ENCODE measurements at regions of chr7 and their contacts with region 1.

Region 1: DNA sequence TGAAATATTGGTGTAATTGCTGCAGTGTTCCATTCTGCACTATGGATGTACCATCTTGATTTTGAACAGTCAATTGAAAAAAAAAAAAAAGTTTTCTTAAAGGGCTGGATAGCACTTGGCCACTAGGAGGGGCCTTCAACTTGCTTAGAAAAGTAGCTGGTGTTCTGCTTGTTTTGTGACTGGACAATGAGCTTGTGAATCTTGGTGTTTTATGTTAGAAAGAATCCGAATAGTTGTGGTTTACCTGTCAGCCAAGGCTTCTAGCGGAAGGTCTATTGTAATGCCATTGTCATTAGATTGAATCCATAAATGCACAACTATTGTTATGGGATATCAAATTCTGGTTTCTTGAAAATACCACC is 77.1 kb downstream of the BMPER start:
- DNase-seq: no peak
- H3K4me3 ChIP-seq: no peak overlapping the region
- H3K27ac ChIP-seq: no peak overlapping the region
- H3K4me1 ChIP-seq: no peaks in the 10 kb centered on the region
- H3K27me3 ChIP-seq: no peaks in the 10 kb centered on the region
- CTCF ChIP-seq: peak in 2 of 3 experiments; percentile 65 to 73; a peak in 3 of 4 replicates
- EP300 ChIP-seq: no peak
- POLR2A ChIP-seq: no peak
- RAD21 ChIP-seq: peak; percentile 80 to 86

Region 2: DNA sequence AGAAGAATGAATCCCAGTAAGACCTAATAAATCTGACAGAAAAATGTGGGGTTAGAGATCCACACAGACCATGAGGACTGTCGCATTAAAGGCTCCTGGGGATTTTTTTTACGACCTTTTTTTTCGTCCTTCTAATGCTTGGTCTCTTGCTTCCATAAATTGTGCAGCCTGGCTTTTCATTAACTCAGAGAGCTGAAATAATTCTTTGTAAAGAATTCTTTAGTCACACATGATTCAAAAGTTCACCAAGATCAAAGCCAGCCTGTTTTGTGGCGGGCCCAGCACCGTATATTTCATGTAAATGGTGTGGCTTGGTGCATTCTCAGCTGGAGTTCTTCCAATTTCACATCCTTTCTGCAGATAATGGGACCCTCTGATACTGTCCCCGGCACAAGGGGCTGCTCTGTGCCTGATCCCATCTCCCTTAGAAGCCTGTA is 283.7 kb before region 1 on chr7:
- CTCF ChIA-PET with region 1: no interaction called
- POLR2A ChIA-PET with region 1: no interaction called
- DNase-seq: no peak
- H3K4me3 ChIP-seq: no peak overlapping the region
- H3K27ac ChIP-seq: no peak overlapping the region
- H3K4me1 ChIP-seq: no peaks in the 10 kb centered on the region
- H3K27me3 ChIP-seq: peaks cover 0 to 4% (median 0%) of the 10 kb centered on the region in 4 experiments; a peak in 2 of 7 replicates
- CTCF ChIP-seq: no peak
- EP300 ChIP-seq: no peak
- POLR2A ChIP-seq: no peak
- RAD21 ChIP-seq: no peak

Region 3: GRCh38 chr7:33998476-33998875 is 16.1 kb after region 1 on chr7:
- CTCF ChIA-PET with region 1: interaction called, 12 read pairs
- POLR2A ChIA-PET with region 1: interaction called, 3 read pairs
- DNase-seq: no peak
- H3K4me3 ChIP-seq: no peak overlapping the region
- H3K27ac ChIP-seq: no peak overlapping the region
- H3K4me1 ChIP-seq: peaks cover 0 to 2% (median 0%) of the 10 kb centered on the region in 4 experiments; a peak in 1 of 7 replicates
- H3K27me3 ChIP-seq: peaks cover 0 to 2% (median 0%) of the 10 kb centered on the region in 4 experiments; a peak in 1 of 7 replicates
- CTCF ChIP-seq: no peak
- EP300 ChIP-seq: no peak
- POLR2A ChIP-seq: no peak
- RAD21 ChIP-seq: no peak

Region 4: DNA sequence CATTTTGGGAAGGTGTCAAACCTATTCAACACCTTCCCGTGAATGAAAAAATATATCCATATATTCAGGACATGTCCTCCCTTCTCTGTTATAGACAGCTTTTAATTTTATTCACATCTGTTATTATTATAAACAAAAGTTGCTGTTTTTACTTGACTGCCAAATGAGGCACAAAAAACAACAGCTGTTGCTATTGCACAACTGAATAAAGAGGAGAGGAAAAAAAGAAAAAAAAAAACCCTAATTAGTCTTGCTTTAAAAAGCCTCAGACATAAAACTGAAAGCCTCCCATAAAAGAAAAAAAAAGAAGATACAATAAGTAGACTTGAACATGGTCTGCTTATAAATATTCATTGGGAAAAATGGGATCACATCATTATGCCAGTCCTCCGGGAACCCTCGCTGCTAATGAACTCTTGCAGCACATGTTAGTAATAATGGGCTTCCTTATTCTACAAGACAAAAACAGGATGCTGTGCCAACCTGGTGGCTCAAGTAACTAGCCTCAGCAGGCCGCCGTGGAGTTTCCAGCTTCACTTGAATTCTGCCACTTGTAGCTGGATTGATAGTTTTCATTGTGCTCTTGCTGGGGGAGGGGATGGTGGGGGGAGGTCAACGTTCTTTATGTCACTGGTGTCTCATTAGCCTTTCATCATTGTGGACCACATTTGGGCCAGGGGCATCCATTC is 76.5 kb after region 1 on chr7:
- CTCF ChIA-PET with region 1: interaction called, 11 read pairs
- POLR2A ChIA-PET with region 1: no interaction called
- DNase-seq: no peak
- H3K4me3 ChIP-seq: no peak overlapping the region
- H3K27ac ChIP-seq: no peak overlapping the region
- H3K4me1 ChIP-seq: peaks cover 3 to 21% (median 12%) of the 10 kb centered on the region in 4 experiments; a peak in 6 of 7 replicates
- H3K27me3 ChIP-seq: no peaks in the 10 kb centered on the region
- CTCF ChIP-seq: no peak
- EP300 ChIP-seq: no peak
- POLR2A ChIP-seq: no peak
- RAD21 ChIP-seq: no peak

Region 5: DNA sequence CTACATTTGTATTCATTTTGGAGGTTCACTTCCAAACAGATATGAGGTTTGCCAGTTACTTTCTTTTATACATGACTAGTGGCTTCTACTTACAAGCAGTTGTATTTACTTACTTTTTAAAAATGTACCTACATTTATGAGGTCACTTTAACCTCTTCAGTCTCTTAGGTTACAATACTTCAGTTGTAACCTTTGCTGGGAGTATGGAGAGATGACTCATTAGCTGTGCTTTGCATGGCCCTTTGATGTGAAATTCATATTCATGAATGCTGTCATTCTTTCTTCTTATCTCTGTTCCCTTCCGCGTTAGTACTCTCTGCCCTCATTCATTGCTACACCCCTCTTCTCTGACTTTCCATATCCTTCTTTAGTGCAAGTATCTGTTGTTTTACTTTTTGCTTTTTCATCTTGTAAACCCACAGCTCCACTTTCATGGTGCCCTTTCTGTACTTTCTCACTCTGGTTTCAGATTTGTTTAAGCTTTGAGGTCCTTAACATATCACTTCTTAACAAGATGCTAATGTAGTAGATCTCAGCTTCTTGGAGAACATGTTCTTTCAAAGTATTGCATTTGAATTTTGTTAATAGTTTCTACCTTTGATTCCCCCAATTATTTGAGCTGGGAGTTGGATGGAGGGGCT is 87.3 kb after region 1 on chr7:
- CTCF ChIA-PET with region 1: interaction called, 20 read pairs
- POLR2A ChIA-PET with region 1: interaction called, 3 read pairs
- DNase-seq: no peak
- H3K4me3 ChIP-seq: no peak overlapping the region
- H3K27ac ChIP-seq: no peak overlapping the region
- H3K4me1 ChIP-seq: peaks cover 4 to 13% (median 12%) of the 10 kb centered on the region in 4 experiments
- H3K27me3 ChIP-seq: no peaks in the 10 kb centered on the region
- CTCF ChIP-seq: no peak
- EP300 ChIP-seq: no peak
- POLR2A ChIP-seq: no peak
- RAD21 ChIP-seq: no peak

Region 6: GRCh38 chr7:34075523-34076370 is 93.3 kb after region 1 on chr7:
- CTCF ChIA-PET with region 1: interaction called, 19 read pairs
- POLR2A ChIA-PET with region 1: no interaction called
- DNase-seq: no peak
- H3K4me3 ChIP-seq: no peak overlapping the region
- H3K27ac ChIP-seq: no peak overlapping the region
- H3K4me1 ChIP-seq: no peaks in the 10 kb centered on the region; a peak in 3 of 7 replicates
- H3K27me3 ChIP-seq: no peaks in the 10 kb centered on the region
- CTCF ChIP-seq: no peak
- EP300 ChIP-seq: no peak
- POLR2A ChIP-seq: no peak
- RAD21 ChIP-seq: no peak

Measured in H1 (cell line).